ENCODE measurements at regions of chr10 and their contacts with region 1.

Region 1: GRCh38 chr10:65838834-65839233 is 1087.0 kb upstream of the LRRTM3 start:
- DNase-seq: no peak
- H3K4me3 ChIP-seq: no peak overlapping the region
- H3K27ac ChIP-seq: no peak overlapping the region
- H3K4me1 ChIP-seq: no peaks in the 10 kb centered on the region
- H3K27me3 ChIP-seq: no peaks in the 10 kb centered on the region
- CTCF ChIP-seq: no peak
- POLR2A ChIP-seq: no peak

Region 2: GRCh38 chr10:65320236-65321026 is 518.4 kb before region 1 on chr10:
- intact Hi-C with region 1: no loop called
- DNase-seq: no peak
- H3K4me3 ChIP-seq: no peak overlapping the region
- H3K27ac ChIP-seq: no peak overlapping the region
- H3K4me1 ChIP-seq: no peaks in the 10 kb centered on the region
- H3K27me3 ChIP-seq: no peaks in the 10 kb centered on the region
- CTCF ChIP-seq: no peak
- POLR2A ChIP-seq: no peak

Region 3: DNA sequence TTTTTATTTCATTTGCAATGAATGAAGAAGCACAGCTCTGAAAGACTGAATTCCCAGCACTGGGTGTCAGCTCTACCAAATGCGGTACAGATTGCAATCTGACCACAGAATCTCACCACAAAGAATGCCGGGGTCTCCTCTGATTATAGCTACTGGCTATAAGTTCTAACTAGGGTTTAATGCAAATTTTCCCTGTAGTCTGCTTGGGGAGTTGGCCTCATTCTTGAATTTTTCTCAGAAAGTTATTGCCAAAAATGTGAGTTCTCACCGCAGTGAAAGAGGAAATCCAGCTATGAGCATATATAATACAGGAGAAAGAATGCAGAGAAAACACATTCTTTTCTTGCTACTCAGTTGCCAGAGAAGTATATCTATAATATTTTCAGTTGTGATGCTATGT is 168.7 kb before region 1 on chr10:
- intact Hi-C with region 1: loop called (anchors 5 kb)
- DNase-seq: no peak
- H3K4me3 ChIP-seq: no peak overlapping the region
- H3K27ac ChIP-seq: no peak overlapping the region
- H3K4me1 ChIP-seq: no peaks in the 10 kb centered on the region
- H3K27me3 ChIP-seq: no peaks in the 10 kb centered on the region
- CTCF ChIP-seq: no peak
- POLR2A ChIP-seq: no peak

Region 4: DNA sequence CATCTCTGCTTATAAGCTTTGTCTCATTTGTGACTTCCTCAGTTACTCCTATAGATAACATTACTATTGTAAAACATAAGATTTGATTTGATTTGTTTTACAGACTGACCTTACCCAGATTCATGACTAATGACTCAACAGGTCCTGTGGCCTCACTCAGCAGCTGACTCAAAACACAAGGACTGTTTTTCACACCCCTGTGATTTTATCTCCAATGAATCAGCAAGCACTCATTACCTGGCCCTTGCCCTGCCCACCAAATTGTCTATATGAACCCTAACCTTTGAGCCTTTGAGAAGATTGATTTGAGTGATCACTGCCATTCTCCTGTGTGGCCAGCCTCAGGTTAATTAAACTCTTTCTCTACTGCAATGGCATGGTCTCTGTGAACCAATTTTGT is 22.4 kb after region 1 on chr10:
- intact Hi-C with region 1: no loop called
- DNase-seq: no peak
- H3K4me3 ChIP-seq: no peak overlapping the region
- H3K27ac ChIP-seq: no peak overlapping the region
- H3K4me1 ChIP-seq: no peaks in the 10 kb centered on the region
- H3K27me3 ChIP-seq: no peaks in the 10 kb centered on the region
- CTCF ChIP-seq: no peak
- POLR2A ChIP-seq: no peak

Measured in breast epithelium (tissue), 4 donors.